Astrocyte of the cerebellum (primary cell): ENCODE measurements at regions of chr11 and their contacts with region 1.

Region 1: GRCh38 chr11:85854557-85855340 is 434 bp upstream of the CCDC83 start:
- DNase-seq: peak; percentile 81
- H3K4me3 ChIP-seq: peak overlapping the region; percentile 48
- CTCF ChIP-seq: peak; percentile 55

Region 2: GRCh38 chr11:86218125-86219084 is 363.7 kb after region 1 on chr11:
- in situ Hi-C with region 1: loop called (anchors 25 kb)
- DNase-seq: peak; percentile 66
- H3K4me3 ChIP-seq: no peak overlapping the region
- CTCF ChIP-seq: peak; percentile 97